ENCODE measurements at regions of chr11 and their contacts with region 1.

Region 1: GRCh38 chr11:69918938-69919650 is 99.9 kb upstream of the FGF3 start:
- DNase-seq: peak; percentile 79
- ATAC-seq: peak; percentile 77
- H3K4me3 Mint-ChIP-seq: no peak overlapping the region
- H3K27ac Mint-ChIP-seq: no peak overlapping the region
- H3K4me1 Mint-ChIP-seq: no peaks in the 10 kb centered on the region
- H3K27me3 Mint-ChIP-seq: peaks cover 28% of the 10 kb centered on the region
- CTCF ChIP-seq: peak; percentile 85

Region 2: DNA sequence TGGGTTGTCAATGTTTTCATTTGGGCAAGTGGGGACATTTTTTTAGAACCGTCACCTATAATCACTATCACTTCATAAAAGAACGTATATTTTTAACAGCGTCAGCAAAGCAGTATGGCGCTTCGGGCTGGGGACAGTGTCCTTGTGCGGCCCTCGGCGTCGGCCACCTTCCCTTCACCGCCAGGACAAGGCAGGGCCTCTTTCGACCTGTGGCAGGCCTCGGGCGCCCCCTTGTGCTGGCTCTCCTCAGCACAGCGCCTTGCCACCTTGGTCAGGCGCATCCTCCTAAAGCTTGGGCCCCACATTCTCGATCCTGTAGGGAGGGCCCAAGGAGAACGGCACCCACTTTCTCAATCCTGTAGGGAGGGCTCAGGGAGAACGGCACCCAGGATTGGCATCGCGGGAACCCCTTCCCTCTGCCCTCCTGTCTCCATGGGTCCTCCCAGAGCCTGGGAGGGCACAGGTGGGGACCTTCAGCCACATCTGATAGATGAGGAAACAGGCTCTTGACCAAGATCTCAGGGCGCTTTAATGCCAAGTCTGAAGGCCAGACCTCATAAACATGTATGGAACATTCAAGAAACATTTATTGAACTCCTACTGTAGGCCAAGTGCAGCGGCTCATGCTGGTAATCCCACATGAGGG is 272.5 kb after region 1 on chr11:
- CTCF ChIA-PET with region 1: interaction called, 16 read pairs
- POLR2A ChIA-PET with region 1: no interaction called
- intact Hi-C with region 1: loop called (anchors 5 kb)
- DNase-seq: peak; percentile 79
- ATAC-seq: peak; percentile 83
- H3K4me3 Mint-ChIP-seq: no peak overlapping the region
- H3K27ac Mint-ChIP-seq: no peak overlapping the region
- H3K4me1 Mint-ChIP-seq: no peaks in the 10 kb centered on the region
- H3K27me3 Mint-ChIP-seq: peaks cover 5% of the 10 kb centered on the region
- CTCF ChIP-seq: peak; percentile 82

Region 3: GRCh38 chr11:70202898-70203748 is 284.0 kb after region 1 on chr11 and contains the start of gene FADD:
- CTCF ChIA-PET with region 1: interaction called, 10 read pairs
- POLR2A ChIA-PET with region 1: no interaction called
- intact Hi-C with region 1: no loop called
- DNase-seq: peak; percentile 94
- ATAC-seq: peak; percentile 74
- H3K4me3 Mint-ChIP-seq: peak within 1 kb of the TSS; percentile 97
- H3K27ac Mint-ChIP-seq: peak within 1 kb of the TSS; percentile 98
- H3K4me1 Mint-ChIP-seq: peaks cover 35% of the 10 kb centered on the region
- H3K27me3 Mint-ChIP-seq: peaks cover 1% of the 10 kb centered on the region
- CTCF ChIP-seq: no peak
- total RNA-seq, gene FADD: 27.6 to 29.6 TPM